ENCODE measurements at regions of chr17 and their contacts with region 1.

Region 1: DNA sequence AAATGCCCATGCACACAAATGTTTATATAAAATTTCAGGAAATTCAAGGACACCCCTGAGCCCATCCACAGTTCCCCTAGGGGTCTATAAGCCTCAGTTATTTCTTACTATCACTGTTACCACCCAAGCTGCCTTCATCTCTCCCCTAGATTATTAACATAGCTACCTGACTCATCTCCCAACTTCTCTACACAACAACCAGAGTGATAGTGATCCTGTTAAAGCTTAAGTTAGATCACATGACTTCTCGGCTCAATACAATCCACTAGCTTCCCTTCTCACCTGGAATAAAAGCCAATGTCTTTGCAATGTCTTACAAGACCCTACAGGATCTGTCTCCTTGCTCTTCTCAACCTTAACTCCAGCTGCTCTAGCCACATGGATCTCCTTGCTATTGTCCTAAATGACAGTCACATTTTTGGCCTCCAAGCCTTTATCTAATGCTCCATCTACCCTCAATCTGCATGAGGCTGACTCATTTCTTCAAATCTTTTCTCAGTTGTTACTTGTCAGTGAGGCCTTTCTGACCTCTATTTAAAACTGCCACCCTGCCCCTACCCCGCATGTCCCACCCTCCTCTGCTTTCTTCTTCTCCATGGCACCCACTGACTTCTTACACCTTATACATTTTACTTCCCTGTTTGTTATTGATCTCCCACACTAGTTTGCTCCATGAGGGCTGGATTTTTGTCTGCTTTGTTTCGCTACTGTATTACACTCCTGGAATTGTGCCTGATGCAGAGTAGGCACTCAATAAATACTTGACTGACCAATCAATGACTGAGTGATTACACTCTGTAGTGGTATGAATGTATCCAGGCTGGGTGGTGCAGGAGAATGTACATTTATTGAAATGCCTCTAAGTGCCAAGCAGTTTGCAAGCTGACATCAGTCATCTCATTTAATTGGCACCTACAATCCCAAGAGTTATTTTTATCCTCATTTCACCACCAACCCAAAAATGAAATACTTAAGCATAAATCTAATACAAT is 5.2 kb upstream of the LIG3 start:
- DNase-seq: no peak
- ATAC-seq: no peak
- H3K4me3 Mint-ChIP-seq: no peak overlapping the region
- H3K27ac Mint-ChIP-seq: no peak overlapping the region
- H3K4me1 Mint-ChIP-seq: peaks cover 23% of the 10 kb centered on the region
- H3K27me3 Mint-ChIP-seq: no peaks in the 10 kb centered on the region

Region 2: DNA sequence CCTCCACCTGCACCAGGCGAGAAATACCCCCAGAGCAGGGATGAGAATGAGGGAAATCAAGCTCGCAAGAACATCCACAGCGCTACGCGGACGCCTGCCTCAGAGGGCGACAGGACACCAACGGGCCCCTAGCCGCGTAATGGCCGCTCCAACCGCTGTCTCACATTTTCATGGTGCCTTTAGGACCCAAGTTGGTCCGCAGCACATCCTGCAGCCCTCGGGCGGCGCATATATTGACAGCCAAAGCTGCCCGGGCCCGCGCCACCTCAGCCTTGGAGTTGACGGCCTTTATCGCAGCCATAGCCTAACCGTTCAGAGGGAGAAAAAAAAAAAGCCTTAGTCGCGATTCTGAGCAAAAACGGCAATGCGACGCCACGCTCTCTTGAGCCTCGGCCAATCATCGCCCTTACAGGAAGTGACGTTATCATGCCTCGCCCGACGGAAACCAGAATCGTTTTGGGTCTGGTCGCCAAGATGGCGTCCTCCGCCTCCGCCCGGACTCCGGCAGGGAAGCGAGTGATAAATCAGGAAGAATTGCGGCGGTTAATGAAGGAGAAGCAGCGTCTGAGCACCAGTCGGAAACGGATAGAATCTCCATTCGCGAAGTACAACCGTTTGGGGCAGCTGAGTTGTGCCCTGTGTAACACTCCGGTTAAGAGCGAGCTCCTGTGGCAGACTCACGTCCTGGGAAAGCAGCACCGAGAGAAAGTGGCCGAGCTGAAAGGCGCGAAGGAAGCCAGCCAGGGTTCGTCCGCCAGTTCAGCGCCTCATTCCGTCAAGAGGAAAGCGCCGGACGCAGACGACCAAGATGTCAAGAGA is 13.8 kb before region 1 on chr17 and contains the starts of genes CCT6B and ZNF830:
- CTCF ChIA-PET with region 1: interaction called, 5 read pairs
- POLR2A ChIA-PET with region 1: interaction called, 23 read pairs
- DNase-seq: peak; percentile 96
- ATAC-seq: peak; percentile 91
- H3K4me3 Mint-ChIP-seq: peak within 1 kb of the TSS; percentile 97
- H3K27ac Mint-ChIP-seq: peak within 1 kb of the TSS; percentile 99
- H3K4me1 Mint-ChIP-seq: peaks cover 23% of the 10 kb centered on the region
- H3K27me3 Mint-ChIP-seq: no peaks in the 10 kb centered on the region
- total RNA-seq, gene CCT6B: 0.83 to 1.1 TPM
- total RNA-seq, gene ZNF830: 22.1 to 24.1 TPM

Region 3: GRCh38 chr17:35002876-35003518 is 27.9 kb after region 1 on chr17:
- CTCF ChIA-PET with region 1: no interaction called
- POLR2A ChIA-PET with region 1: no interaction called
- DNase-seq: no peak
- ATAC-seq: no peak
- H3K4me3 Mint-ChIP-seq: no peak overlapping the region
- H3K27ac Mint-ChIP-seq: peak overlapping the region; percentile 45
- H3K4me1 Mint-ChIP-seq: peaks cover 5% of the 10 kb centered on the region
- H3K27me3 Mint-ChIP-seq: no peaks in the 10 kb centered on the region

Measured in activated CD8-positive, alpha-beta T cell treated with anti-CD3 and anti-CD28 coated beads, Interleukin-2, amount 10 ng/mL, durations not matched to agents 7 days and 5 days (primary cell).